ENCODE measurements at regions of chr11 and their contacts with region 1.

Region 1: DNA sequence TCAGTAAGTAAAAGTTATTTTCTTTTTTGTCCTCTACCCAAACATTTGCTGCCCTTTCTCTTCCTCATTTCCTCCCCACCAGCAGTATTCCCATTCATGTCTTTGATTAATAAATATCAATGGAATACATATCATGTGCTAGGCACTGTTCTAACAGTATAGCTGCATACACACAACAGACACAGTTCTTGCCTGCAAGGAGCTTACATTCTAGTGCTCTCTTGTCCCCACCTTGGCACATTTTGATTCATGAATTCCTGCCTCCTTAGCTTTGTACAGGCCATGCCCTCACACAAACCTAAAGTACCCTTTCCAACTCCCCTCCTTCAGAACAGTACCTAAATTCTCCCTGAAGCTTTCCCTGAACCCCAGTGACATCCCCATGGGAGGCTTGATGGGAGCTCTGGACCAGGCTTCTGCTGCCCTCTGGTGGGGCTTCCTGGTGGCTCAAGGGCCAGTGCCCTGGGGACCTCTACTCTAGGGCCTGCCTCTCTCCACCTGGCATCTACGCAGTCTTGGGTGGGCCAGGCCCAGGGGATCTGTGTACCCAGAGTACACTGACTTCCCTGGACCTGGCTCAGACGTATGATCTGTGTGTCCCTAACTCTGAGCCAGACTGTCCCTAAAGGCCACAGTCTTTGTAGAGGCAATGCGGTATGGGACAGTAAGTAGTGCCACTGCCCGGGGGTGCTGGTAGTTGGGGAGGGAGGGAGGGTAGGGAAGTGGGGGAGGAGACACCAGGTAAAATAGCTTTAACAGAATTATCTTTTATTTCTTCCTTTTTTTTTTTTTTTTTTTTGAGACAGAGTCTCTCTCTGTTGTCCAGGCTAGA is 14.1 kb downstream of the RPS13 start:
- DNase-seq: peak; percentile 81
- H3K4me3 ChIP-seq: no peak overlapping the region
- H3K27ac ChIP-seq: no peak overlapping the region
- H3K4me1 ChIP-seq: no peaks in the 10 kb centered on the region
- H3K27me3 ChIP-seq: no peaks in the 10 kb centered on the region
- CTCF ChIP-seq: peak; percentile 34 to 80 (median 67)
- POLR2A ChIP-seq: no peak

Region 2: DNA sequence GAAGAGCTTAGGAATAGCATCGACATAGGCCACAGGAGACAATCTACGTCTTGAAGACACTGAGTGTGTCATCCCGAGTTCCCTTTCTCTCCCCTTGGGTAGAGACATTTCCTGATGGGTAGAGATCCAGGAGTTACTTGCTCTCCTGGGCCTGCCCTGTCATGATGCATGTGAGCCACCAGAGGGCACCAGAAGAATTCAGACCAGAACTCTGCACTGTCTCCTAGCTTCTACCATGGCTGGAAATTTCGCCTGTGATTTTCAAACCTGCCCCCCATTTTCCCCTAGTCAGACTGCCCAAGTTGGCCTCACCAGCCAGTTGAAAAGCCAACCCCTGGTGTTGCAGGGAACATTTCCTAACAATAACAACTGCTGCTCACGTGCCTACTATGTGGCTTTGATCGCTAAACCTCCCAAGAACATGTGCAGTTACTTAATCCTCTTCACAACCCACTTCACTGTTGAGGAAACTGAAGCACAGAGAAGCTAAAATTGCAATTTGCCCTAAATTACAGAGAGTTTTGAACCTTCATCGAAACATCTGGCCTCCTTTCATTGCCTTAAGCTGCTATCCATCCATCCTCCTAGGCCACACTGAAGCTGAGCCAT is 277.8 kb before region 1 on chr11:
- intact Hi-C with region 1: loop called (anchors 5 kb)
- DNase-seq: peak; percentile 76
- H3K4me3 ChIP-seq: no peak overlapping the region
- H3K27ac ChIP-seq: peak overlapping the region in 2 of 8 donors; percentile 15 to 29
- H3K4me1 ChIP-seq: peaks cover 0 to 41% (median 13%) of the 10 kb centered on the region in 6 donors
- H3K27me3 ChIP-seq: no peaks in the 10 kb centered on the region
- CTCF ChIP-seq: peak; percentile 65 to 96 (median 88)
- POLR2A ChIP-seq: no peak

Region 3: GRCh38 chr11:16924826-16925560 is 138.4 kb before region 1 on chr11:
- intact Hi-C with region 1: no loop called
- DNase-seq: no peak
- H3K4me3 ChIP-seq: peak overlapping the region; percentile 27 to 67 (median 40)
- H3K27ac ChIP-seq: no peak overlapping the region
- H3K4me1 ChIP-seq: peaks cover 0 to 28% (median 22%) of the 10 kb centered on the region in 6 donors
- H3K27me3 ChIP-seq: peaks cover 0 to 50% (median 33%) of the 10 kb centered on the region in 7 donors
- CTCF ChIP-seq: no peak
- POLR2A ChIP-seq: no peak

Region 4: GRCh38 chr11:16945671-16946469 is 117.5 kb before region 1 on chr11:
- intact Hi-C with region 1: loop called (anchors 5 kb)
- DNase-seq: peak; percentile 81
- H3K4me3 ChIP-seq: peak overlapping the region in 1 of 8 donors; percentile 30
- H3K27ac ChIP-seq: peak overlapping the region in 1 of 8 donors; percentile 13
- H3K4me1 ChIP-seq: peaks cover 0 to 13% (median 4%) of the 10 kb centered on the region in 6 donors
- H3K27me3 ChIP-seq: no peaks in the 10 kb centered on the region
- CTCF ChIP-seq: peak in 9 of 11 experiments; percentile 34 to 74 (median 64)
- POLR2A ChIP-seq: no peak